Left ventricle myocardium superior (tissue), 1 donor: ENCODE measurements at regions of chr2 and their contacts with region 1.

Region 1: DNA sequence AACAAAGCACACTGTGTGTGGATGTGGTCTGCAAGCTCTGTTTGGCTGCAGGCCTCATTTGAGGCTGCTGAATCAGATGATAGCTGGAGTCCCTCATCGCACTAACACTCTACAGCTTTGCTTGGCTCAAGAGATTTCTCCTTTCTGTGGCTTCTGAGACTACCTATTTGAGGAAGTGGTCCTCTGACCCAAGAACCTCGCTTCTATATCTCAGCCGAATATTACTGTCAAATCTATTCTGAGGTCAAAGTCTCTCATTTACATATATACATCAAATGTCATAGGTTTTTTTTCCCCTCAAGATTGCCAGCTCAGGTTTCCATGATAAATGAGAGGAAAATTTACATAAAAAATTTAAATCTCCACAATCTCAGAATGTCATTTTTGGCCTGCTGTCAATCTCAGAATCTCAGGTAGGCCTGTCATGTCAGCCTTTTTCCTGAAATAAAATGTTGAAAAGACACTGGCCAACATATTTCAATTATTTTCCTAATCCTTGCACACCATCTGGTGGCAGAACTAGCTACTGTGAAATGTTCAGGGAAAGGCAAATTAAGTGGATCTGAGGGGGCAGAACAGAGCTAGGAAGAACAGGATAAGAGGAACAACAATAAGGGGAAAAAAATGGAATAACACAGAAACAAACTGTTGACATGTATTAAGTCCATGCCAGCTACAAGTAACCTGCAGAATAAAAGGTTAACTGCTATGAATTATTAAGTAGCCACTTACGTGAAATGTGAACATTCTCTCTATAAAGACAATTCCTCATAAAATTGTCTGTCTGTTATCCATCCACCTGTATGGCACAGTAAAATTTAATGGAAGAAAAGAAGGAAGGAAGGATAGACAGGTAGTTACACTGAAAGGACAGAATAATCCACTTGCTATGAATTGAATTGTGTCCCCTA is 39.3 kb downstream of the AP1S3 start:
- DNase-seq: no peak
- ATAC-seq: peak; percentile 47

Region 2: DNA sequence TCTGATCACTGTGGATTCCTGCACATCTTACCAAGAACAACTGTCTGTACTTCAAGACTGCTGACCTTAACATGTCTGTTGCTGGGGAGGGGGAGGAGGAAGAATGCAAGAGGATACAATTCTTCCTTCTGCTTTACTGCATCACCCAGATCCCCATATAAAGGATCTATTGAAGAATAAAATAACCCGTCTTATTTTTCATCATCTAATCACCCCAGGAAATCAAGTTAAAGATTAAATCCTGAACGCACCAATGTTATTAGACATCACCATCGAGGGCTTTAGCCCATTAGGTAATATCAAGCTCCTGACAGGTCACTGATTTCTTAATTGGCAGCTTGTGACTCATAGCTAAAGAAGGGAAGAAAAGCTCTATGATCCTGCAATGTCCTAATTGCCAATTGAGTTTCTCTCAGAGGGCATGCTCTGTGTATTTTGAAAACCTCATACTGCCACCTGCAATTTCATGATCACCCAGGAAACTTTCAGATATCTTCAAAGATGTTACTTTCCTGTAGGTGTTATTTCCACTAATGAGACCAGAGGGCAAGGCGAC is 821.5 kb before region 1 on chr2:
- intact Hi-C with region 1: loop called (anchors 5 kb)
- DNase-seq: no peak
- ATAC-seq: no peak

Region 3: GRCh38 chr2:223618172-223619035 is 179.7 kb before region 1 on chr2:
- intact Hi-C with region 1: no loop called
- DNase-seq: no peak
- ATAC-seq: no peak

Region 4: GRCh38 chr2:223692191-223692947 is 105.7 kb before region 1 on chr2:
- intact Hi-C with region 1: loop called (anchors 10 kb)
- DNase-seq: no peak
- ATAC-seq: peak; percentile 60

Region 5: GRCh38 chr2:223877731-223878435 is 79.8 kb after region 1 on chr2:
- intact Hi-C with region 1: no loop called
- DNase-seq: no peak
- ATAC-seq: no peak

Region 6: DNA sequence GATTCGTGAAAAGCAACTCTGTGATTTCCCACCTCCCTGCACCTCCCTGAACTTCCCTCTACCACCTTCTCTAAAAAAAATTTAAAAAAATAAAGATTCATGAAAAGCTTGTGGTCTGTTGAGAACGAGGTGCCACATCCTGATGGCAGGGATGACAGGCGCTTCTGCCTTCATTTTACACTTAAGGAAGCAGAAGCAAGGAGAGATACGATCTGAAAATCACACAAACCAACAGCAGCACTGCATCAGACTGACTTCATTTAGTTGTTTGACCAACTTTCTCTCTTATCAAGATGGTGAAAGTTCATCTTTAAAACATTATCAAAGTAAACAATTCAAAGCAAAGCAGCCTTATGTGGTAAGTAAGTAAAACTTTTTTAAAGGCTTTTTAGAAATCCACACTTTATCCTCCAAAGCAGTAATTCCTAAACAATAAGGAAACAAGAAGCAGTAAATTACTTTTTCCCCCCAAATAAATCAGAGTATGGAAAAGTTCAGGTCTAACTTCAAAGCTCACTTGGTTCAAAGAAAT is 131.6 kb after region 1 on chr2:
- intact Hi-C with region 1: no loop called
- DNase-seq: no peak
- ATAC-seq: no peak

Region 7: DNA sequence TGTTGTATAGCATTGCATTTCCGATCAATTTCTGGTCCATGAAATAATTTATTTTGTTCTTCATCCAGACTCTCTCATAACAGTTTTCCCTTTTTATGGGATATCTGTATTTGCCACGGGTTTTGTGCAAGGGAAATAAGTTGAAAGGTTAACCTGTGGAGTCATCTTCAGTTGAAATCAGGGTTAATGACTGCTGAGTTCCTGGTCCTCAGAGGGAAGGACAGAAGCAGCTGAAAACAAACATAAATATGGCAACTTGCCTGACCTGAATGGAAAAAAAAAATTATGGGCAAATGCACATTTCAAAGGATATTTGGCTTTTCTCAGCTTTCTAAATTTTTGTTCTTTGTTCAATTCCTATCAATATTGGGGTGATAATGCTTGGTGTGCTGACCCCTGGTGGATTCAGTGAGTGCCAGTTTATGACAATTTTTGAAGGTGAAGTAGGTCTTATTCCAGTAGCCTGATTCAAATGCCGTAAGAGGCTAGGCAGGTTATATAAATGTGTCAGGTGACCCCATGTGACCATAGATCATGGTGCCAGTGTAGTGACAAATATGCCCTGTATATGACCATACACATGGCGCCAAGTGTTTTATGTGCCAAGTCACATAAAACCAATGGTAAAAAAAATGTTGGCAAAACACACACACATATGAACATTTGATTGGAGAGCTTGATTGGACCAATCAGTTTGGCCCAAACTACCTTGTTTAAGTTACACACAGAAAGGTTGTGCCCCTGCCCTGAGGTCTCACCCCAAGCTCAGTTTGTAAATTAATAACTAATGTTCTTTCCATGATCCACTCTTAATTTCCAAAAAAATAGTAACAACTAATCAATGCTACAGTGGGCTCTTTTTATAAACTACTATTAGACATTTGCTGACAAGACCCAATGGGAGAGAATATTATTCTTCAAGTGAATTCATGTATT is 651.4 kb after region 1 on chr2:
- intact Hi-C with region 1: no loop called
- DNase-seq: no peak
- ATAC-seq: no peak